Dorsolateral prefrontal cortex (tissue), 120 donors: ENCODE measurements at regions of chr5 and their contacts with region 1.

Region 1: DNA sequence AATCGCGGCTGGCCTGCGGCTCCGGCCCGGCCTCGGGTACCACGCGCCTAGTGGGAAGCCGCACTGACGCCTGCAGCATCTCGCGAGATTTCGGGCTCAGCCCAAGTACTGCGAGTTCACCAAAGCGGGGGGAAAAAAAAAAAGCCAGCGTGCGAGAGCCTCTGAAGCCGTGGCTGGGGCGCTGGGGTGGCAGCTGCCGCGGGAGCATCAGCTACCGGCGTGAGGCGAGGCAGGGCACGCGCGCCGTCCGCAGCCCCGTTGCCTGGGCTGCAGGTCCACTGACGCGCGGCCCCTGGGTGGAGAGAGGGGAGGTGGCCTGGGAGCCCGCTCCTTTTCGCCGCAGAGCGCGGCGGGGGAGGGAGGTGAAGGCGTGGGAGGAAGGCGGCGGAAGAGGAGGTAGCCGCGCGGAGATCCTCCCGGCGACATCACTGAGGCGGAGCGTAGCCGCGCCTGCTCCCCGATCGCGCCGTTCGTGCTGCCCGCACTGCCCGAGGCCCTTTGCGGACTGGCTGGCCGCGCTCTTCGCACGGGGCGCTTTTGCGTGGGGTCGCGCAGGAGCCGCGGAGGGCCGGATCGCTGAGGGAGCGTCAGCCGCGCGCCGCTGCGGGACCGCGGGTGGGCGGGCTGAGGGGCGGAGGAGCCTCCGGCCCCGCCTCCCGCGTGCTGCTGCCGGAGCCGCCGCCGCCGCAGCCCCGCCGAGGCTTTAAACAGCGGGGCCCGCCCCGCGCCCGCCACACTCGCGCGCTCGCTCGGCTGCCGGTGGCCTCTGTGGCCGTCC is at the start of gene SLC12A2:
- DNase-seq: peak; percentile 80 to 94 (median 90)
- H3K4me3 ChIP-seq: peak within 1 kb of the TSS; percentile 64 to 98 (median 89)
- H3K27ac ChIP-seq: peak within 1 kb of the TSS; percentile 92 to 100 (median 98)
- H3K27me3 ChIP-seq: no peaks in the 10 kb centered on the region
- CTCF ChIP-seq: peak in 13 of 56 donors; percentile 6 to 43 (median 22)
- total RNA-seq, gene SLC12A2: 48.4 to 191 (median 77.9) TPM

Region 2: GRCh38 chr5:127564002-127564769 is 519.0 kb before region 1 on chr5:
- intact Hi-C with region 1: loop called in 1 of 2 experiments (anchors 10 kb)
- DNase-seq: peak in 2 of 10 donors; percentile 24 to 52
- H3K4me3 ChIP-seq: no peak overlapping the region
- H3K27ac ChIP-seq: no peak overlapping the region
- H3K27me3 ChIP-seq: peaks cover 0 to 7% (median 0%) of the 10 kb centered on the region in 45 donors
- CTCF ChIP-seq: peak; percentile 46 to 85 (median 71)

Region 3: GRCh38 chr5:127660047-127660733 is 423.0 kb before region 1 on chr5:
- intact Hi-C with region 1: no loop called
- DNase-seq: no peak
- H3K4me3 ChIP-seq: no peak overlapping the region
- H3K27ac ChIP-seq: no peak overlapping the region
- H3K27me3 ChIP-seq: no peaks in the 10 kb centered on the region
- CTCF ChIP-seq: no peak

Region 4: GRCh38 chr5:127757576-127757975 is 325.6 kb before region 1 on chr5:
- intact Hi-C with region 1: loop called (anchors 5 to 10 kb)
- DNase-seq: peak in 3 of 10 donors; percentile 51 to 60 (median 52)
- H3K4me3 ChIP-seq: no peak overlapping the region
- H3K27ac ChIP-seq: no peak overlapping the region
- H3K27me3 ChIP-seq: no peaks in the 10 kb centered on the region
- CTCF ChIP-seq: peak in 55 of 56 donors; percentile 25 to 71 (median 54)

Region 5: GRCh38 chr5:127766676-127767340 is 316.4 kb before region 1 on chr5:
- intact Hi-C with region 1: loop called in 1 of 2 experiments (anchors 10 kb)
- DNase-seq: no peak
- H3K4me3 ChIP-seq: no peak overlapping the region
- H3K27ac ChIP-seq: no peak overlapping the region
- H3K27me3 ChIP-seq: no peaks in the 10 kb centered on the region
- CTCF ChIP-seq: no peak

Region 6: GRCh38 chr5:127875235-127876021 is 207.8 kb before region 1 on chr5:
- intact Hi-C with region 1: loop called (anchors 5 to 10 kb)
- DNase-seq: peak in 9 of 10 donors; percentile 26 to 80 (median 54)
- H3K4me3 ChIP-seq: peak overlapping the region in 12 of 59 donors; percentile 2 to 36 (median 14)
- H3K27ac ChIP-seq: peak overlapping the region in 44 of 59 donors; percentile 2 to 78 (median 45)
- H3K27me3 ChIP-seq: no peaks in the 10 kb centered on the region
- CTCF ChIP-seq: peak; percentile 12 to 76 (median 56)

Region 7: GRCh38 chr5:128146671-128147070 is 63.4 kb after region 1 on chr5:
- intact Hi-C with region 1: loop called in 1 of 2 experiments (anchors 5 kb)
- DNase-seq: no peak
- H3K4me3 ChIP-seq: no peak overlapping the region
- H3K27ac ChIP-seq: peak overlapping the region in 39 of 59 donors; percentile 3 to 93 (median 84)
- H3K27me3 ChIP-seq: no peaks in the 10 kb centered on the region
- CTCF ChIP-seq: no peak

Region 8: DNA sequence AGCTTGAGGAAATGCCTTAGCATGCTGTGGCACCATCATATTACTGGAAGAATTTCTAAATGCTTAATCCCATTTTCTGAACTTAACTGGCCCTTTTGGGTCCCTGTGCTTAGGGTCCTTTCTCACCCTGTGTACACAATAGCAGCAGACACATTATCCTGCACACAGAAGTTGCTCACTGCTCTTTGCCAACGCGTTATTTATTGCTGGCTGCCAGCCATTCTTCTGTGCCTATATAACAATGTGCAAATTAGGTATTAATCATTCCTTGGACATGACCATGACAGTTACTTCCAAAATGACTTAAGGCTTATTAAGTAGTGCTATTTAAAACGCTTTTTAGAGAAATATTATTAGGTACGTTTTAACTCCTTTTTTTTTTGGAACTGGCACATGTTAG is 320.1 kb after region 1 on chr5:
- intact Hi-C with region 1: no loop called
- DNase-seq: no peak
- H3K4me3 ChIP-seq: no peak overlapping the region
- H3K27ac ChIP-seq: no peak overlapping the region
- H3K27me3 ChIP-seq: peaks cover 0 to 11% (median 0%) of the 10 kb centered on the region in 45 donors
- CTCF ChIP-seq: no peak